Endothelial cell of umbilical vein (primary cell): ENCODE measurements at regions of chr6 and their contacts with region 1.

Region 1: DNA sequence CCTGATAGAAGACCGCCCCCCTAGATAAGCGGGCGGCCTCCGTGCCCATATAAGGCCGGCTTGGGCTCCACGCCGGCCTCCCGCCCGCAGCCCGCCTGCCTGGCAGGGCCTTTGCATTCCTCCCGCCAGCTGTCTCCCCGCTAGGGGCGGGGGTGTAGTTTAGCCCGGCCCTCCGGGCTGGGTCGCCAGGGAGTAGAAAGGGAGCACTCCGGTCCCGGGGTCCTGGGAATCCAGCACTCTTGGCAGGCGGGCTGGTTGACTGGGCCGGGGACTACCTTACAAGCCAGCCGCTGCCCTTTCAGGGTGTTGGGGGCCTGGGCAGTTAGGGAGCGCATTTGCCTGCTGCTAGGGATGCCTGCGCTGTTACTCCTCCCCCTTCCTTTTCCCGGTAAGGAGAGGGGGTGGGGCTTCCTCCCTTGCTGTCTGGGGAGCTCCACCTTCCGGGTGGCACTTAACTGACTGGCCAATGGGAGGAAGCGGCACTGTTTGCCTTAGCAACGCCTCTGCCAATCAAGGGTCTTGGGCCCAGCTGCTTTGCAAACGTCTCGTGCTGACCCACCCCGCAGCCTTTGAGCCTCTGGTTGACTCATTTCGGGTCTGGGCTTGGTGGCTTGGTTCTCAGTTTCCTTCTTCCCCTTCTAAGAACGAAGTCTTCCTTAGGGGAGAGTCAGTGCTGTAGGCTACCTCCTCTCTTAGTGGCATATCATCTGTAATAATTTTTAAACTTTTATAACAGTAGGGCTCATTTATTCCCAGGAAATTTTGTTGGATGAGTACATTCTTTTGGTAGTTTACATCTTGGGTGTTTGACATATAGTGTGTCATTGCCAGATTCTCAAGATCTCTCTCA is 3.4 kb downstream of the SRF start:
- DNase-seq: peak; percentile 99
- H3K4me3 ChIP-seq: peak overlapping the region in 2 of 3 experiments; percentile 40 to 41
- H3K27ac ChIP-seq: peak overlapping the region; percentile 76
- H3K4me1 ChIP-seq: peaks cover 25% of the 10 kb centered on the region
- H3K27me3 ChIP-seq: no peaks in the 10 kb centered on the region
- CTCF ChIP-seq: peak in 1 of 2 donors; percentile 28
- POLR2A ChIP-seq: peak; percentile 78

Region 2: GRCh38 chr6:42745707-42746462 is 428.6 kb before region 1 on chr6 and contains the start of gene TBCC:
- CTCF ChIA-PET with region 1: no interaction called
- POLR2A ChIA-PET with region 1: no interaction called
- dilution Hi-C with region 1: no loop called
- intact Hi-C with region 1: loop called (anchors 1 kb)
- DNase-seq: peak; percentile 98
- H3K4me3 ChIP-seq: peak within 1 kb of the TSS; percentile 84 to 92 (median 90)
- H3K27ac ChIP-seq: peak within 1 kb of the TSS; percentile 72
- H3K4me1 ChIP-seq: peaks cover 25% of the 10 kb centered on the region
- H3K27me3 ChIP-seq: no peaks in the 10 kb centered on the region
- CTCF ChIP-seq: no peak
- POLR2A ChIP-seq: peak; percentile 97
- total RNA-seq, gene TBCC: 17.1 and 19.1 TPM in 2 replicates

Region 3: GRCh38 chr6:42928986-42929820 is 245.3 kb before region 1 on chr6 and contains the start of gene CNPY3:
- CTCF ChIA-PET with region 1: interaction called, 3 read pairs
- POLR2A ChIA-PET with region 1: no interaction called
- dilution Hi-C with region 1: no loop called
- intact Hi-C with region 1: loop called (anchors 1 kb)
- DNase-seq: peak; percentile 98
- H3K4me3 ChIP-seq: peak within 1 kb of the TSS; percentile 54 to 94 (median 85)
- H3K27ac ChIP-seq: peak within 1 kb of the TSS; percentile 95
- H3K4me1 ChIP-seq: peaks cover 17% of the 10 kb centered on the region
- H3K27me3 ChIP-seq: peaks cover 0 to 3% of the 10 kb centered on the region in 2 experiments
- CTCF ChIP-seq: peak in 1 of 2 donors; percentile 7
- POLR2A ChIP-seq: no peak
- total RNA-seq, gene CNPY3: 43.3 and 53.1 TPM in 2 replicates

Region 4: DNA sequence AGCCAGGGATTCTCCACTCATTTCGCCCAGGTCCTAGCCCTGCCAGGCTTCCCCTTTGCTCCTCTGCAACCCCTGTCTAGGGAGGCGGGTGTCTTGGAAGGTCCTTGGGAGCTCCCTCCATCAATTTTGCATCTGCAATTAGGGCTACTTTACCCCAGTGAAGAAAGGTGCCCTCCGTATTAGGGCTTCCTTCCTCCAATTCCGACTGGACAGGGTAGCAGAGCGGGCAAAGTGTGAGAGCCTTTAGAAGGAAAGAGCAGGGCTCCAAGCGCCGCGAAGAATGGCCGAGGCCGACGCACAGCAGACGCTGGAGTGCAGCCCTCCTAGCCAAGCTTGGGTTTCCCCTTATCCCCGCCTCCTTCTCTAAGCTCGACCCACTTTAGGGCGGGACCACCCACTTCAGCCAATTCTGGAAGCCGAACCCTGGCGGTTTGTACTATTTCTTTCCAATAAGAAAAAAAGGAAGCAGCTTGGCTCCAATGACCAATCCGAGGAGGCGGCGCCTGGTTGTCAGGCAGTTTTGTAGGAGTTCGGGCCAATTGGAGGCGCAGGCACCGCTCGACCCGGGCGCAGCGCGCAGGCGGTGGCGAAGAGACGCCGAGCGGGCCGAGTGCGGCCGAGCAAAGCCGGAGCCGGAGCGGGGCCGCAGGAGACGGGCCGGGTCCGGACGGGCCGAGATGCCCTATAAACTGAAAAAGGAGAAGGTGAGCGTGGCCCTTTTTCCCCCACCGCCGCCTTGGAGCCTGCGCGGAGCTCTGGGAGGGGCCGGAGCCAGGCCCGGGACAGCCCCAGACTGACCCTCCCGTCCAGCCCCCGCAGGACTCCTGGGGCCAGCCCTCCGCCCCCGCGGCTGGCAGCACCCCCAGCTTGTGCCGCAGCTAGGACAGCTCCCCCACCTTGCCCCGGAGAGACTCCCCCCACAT is 190.2 kb before region 1 on chr6 and contains the start of gene PPP2R5D:
- CTCF ChIA-PET with region 1: no interaction called
- POLR2A ChIA-PET with region 1: no interaction called
- dilution Hi-C with region 1: no loop called
- intact Hi-C with region 1: loop called (anchors 1 kb)
- DNase-seq: peak; percentile 99
- H3K4me3 ChIP-seq: peak within 1 kb of the TSS; percentile 57 to 90 (median 83)
- H3K27ac ChIP-seq: no peak within 1 kb of the TSS
- H3K4me1 ChIP-seq: peaks cover 35% of the 10 kb centered on the region
- H3K27me3 ChIP-seq: no peaks in the 10 kb centered on the region
- CTCF ChIP-seq: no peak
- POLR2A ChIP-seq: peak; percentile 66
- total RNA-seq, gene PPP2R5D: 45.5 and 51.0 TPM in 2 replicates

Region 5: GRCh38 chr6:43059168-43060033 is 115.1 kb before region 1 on chr6 and contains the starts of genes KLC4 and MRPL2:
- CTCF ChIA-PET with region 1: interaction called, 4 read pairs
- POLR2A ChIA-PET with region 1: no interaction called
- dilution Hi-C with region 1: no loop called
- intact Hi-C with region 1: loop called (anchors 1 kb)
- DNase-seq: peak; percentile 100
- H3K4me3 ChIP-seq: peak within 1 kb of the TSS; percentile 80 to 96 (median 94)
- H3K27ac ChIP-seq: peak within 1 kb of the TSS; percentile 91
- H3K4me1 ChIP-seq: peaks cover 15% of the 10 kb centered on the region
- H3K27me3 ChIP-seq: no peaks in the 10 kb centered on the region
- CTCF ChIP-seq: no peak
- POLR2A ChIP-seq: peak; percentile 92
- total RNA-seq, gene KLC4: 26.8 and 26.9 TPM in 2 replicates
- total RNA-seq, gene MRPL2: 59.7 and 63.6 TPM in 2 replicates

Region 6: DNA sequence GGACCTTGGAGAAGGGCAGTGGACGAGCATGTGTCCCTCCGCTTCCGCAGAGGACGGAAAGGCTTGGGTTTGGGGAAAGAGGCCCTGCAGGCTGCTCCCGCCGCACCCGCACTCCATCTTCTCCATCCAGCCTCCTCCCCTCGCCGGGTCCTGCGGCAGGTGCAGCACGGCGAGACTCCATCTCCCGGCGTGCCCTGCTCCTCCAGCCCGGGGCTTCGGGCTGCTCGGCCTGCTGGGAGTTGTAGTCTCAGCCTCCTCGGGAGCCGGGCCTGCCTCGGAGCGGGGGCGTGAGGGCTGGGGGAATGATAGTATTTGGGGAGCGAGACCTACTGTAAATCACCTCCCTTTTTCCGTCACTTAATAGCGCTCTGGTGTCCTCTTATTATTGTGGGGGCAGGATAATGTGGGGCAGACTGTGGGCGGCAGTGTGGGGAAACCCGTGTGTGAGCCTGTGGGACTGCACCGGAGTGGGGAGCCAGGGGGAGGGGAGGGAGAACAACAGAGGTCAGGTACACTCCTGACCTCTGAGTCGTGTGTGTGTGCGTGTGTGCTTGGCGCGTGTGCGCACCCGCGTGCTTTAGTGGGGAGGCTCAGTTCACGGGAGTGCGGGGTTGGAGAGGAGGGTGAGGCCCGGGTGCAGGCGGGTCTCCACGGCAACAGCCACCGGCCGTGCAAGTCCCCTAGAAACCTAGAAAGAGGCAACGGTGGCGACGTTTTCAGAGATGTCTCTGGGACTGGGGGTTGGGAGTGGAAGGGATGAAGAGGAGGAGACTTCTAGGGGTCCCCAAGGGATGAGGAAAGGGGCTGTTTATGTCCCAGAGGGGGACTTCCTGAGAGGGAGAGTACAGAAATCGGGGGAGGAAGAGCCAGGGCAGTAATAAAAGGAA is 72.9 kb after region 1 on chr6:
- CTCF ChIA-PET with region 1: no interaction called
- POLR2A ChIA-PET with region 1: no interaction called
- dilution Hi-C with region 1: no loop called
- intact Hi-C with region 1: loop called (anchors 5 kb)
- DNase-seq: peak; percentile 66
- H3K4me3 ChIP-seq: peak overlapping the region; percentile 5 to 44 (median 27)
- H3K27ac ChIP-seq: no peak overlapping the region
- H3K4me1 ChIP-seq: peaks cover 4% of the 10 kb centered on the region
- H3K27me3 ChIP-seq: peaks cover 35 to 51% of the 10 kb centered on the region in 2 experiments
- CTCF ChIP-seq: no peak
- POLR2A ChIP-seq: no peak

Region 7: GRCh38 chr6:43369174-43370022 is 194.9 kb after region 1 on chr6 and contains the start of gene ZNF318:
- CTCF ChIA-PET with region 1: interaction called, 3 read pairs
- POLR2A ChIA-PET with region 1: no interaction called
- dilution Hi-C with region 1: no loop called
- intact Hi-C with region 1: loop called (anchors 2 kb)
- DNase-seq: peak; percentile 95
- H3K4me3 ChIP-seq: peak within 1 kb of the TSS; percentile 31 to 66 (median 63)
- H3K27ac ChIP-seq: peak within 1 kb of the TSS; percentile 51
- H3K4me1 ChIP-seq: peaks cover 8% of the 10 kb centered on the region
- H3K27me3 ChIP-seq: no peaks in the 10 kb centered on the region
- CTCF ChIP-seq: no peak
- POLR2A ChIP-seq: peak; percentile 73
- total RNA-seq, gene ZNF318: 13.0 and 13.6 TPM in 2 replicates